SK-N-SH (cell line): ENCODE measurements at regions of chr18 and their contacts with region 1.

Region 1: GRCh38 chr18:9069601-9070000 is 32.9 kb upstream of the NDUFV2 start:
- DNase-seq: no peak
- H3K4me3 ChIP-seq: no peak overlapping the region
- H3K27ac ChIP-seq: no peak overlapping the region
- H3K4me1 ChIP-seq: no peaks in the 10 kb centered on the region; a peak in 1 of 4 replicates
- H3K27me3 ChIP-seq: no peaks in the 10 kb centered on the region
- CTCF ChIP-seq: no peak
- EP300 ChIP-seq: no peak
- RAD21 ChIP-seq: no peak

Region 2: GRCh38 chr18:9017170-9017904 is 52.3 kb before region 1 on chr18:
- CTCF ChIA-PET with region 1: no interaction called
- POLR2A ChIA-PET with region 1: no interaction called
- DNase-seq: peak; percentile 34
- H3K4me3 ChIP-seq: no peak overlapping the region
- H3K27ac ChIP-seq: peak overlapping the region; percentile 12 to 63; a peak in 2 of 4 replicates
- H3K4me1 ChIP-seq: peaks cover 0 to 3% of the 10 kb centered on the region in 2 experiments; a peak in 1 of 4 replicates
- H3K27me3 ChIP-seq: no peaks in the 10 kb centered on the region
- CTCF ChIP-seq: no peak
- EP300 ChIP-seq: 0 out of 4 replicates have a peak, but pooled peaks of 1 of the 2 experiments have one; percentile 22
- RAD21 ChIP-seq: no peak

Region 3: DNA sequence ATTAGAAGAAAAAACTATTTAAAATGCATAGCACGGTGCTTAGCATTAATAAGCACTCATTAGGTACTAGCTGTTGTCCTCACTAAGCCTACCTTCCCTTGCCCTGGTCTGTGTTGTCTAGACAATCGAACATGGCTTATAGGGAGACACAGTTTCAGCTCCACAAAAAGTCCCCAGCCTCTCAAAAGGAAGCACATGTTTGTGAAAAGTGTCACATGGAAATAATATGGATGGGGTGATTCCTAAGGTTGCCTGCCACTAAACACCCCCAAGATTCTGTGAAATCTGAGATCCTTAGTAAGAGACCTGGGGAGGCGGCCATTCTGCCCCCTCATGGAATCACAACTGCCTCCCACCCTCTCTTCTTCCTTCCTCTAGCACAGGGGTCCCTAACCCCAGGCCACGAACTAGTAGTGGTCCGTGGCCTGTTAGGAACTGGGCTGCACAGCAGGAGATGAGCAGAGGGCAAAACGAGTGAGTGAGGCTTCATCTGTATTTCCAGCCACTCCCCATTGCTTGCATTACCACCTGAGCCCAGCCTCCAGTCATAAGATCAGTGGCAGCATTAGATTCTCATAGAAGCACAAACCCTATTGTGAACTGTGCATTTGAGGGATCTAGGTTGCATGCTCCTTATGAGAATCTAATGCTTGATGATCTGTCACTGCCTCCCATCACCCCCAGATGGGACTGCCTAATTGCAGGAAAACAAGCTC is 26.7 kb before region 1 on chr18:
- CTCF ChIA-PET with region 1: no interaction called
- POLR2A ChIA-PET with region 1: no interaction called
- DNase-seq: no peak
- H3K4me3 ChIP-seq: no peak overlapping the region
- H3K27ac ChIP-seq: no peak overlapping the region
- H3K4me1 ChIP-seq: no peaks in the 10 kb centered on the region; a peak in 1 of 4 replicates
- H3K27me3 ChIP-seq: no peaks in the 10 kb centered on the region
- CTCF ChIP-seq: no peak
- EP300 ChIP-seq: no peak
- RAD21 ChIP-seq: no peak

Region 4: DNA sequence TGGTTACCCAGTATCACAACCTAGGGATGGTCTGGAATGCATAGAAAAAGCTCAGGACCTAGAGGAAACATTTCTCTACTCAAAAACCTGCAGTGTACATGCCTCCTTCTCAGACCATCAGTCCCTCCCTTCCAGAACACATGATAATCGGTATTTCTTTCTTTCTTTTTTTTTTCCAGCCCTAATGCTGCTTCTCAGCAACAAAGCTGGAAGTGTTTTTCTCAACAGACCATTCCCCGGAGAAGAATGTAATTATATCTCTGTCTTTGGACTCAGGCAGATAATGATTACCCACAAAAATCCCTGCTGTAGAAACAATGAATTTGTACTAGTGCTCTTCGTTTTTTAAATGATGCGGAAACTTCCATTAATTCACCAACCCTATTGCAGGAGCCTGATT is 11.2 kb before region 1 on chr18:
- CTCF ChIA-PET with region 1: interaction called, 21 read pairs
- POLR2A ChIA-PET with region 1: interaction called, 3 read pairs
- DNase-seq: peak; percentile 9
- H3K4me3 ChIP-seq: no peak overlapping the region
- H3K27ac ChIP-seq: no peak overlapping the region; a peak in 1 of 4 replicates
- H3K4me1 ChIP-seq: peaks cover 0 to 3% of the 10 kb centered on the region in 2 experiments; a peak in 1 of 4 replicates
- H3K27me3 ChIP-seq: no peaks in the 10 kb centered on the region
- CTCF ChIP-seq: no peak
- EP300 ChIP-seq: no peak
- RAD21 ChIP-seq: no peak

Region 5: DNA sequence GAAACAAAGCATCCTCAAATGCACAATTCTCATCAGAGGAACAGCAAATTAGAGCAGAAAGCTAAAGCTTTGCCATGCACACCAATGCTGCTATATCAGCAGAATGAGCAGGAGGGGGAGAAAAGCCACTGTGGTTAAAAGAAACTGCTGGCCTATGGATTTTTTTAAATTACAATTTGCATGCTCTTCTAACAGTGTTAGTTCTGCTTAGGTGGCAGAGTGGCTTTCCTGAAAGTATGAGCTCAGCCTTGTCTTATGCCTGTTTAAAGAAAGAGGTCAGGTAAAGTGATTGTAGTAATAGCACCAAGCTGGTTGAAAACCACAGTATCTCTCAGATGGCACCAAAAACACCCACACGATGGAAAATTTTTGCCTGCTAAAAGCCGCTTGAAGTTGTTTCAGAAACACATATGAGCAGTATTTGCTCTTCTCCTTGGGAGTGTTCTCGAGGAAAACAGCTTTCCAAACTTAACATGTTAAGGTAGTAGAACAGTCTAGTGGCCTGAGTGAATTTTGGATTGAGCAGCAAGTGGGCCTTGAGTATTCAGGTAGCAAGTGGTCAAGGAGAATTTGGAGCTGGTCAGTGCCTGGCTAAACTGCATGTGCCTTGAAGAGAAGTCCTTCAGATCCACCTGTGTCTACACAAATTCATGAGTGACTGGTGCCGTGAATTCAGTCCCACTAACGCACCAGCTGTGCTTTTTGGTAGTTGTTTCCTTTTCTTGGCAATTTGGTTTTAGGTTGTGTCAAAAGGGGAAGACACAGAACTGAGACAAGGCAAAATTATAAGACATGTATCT is 13.3 kb after region 1 on chr18:
- CTCF ChIA-PET with region 1: interaction called, 21 read pairs
- POLR2A ChIA-PET with region 1: no interaction called
- DNase-seq: no peak
- H3K4me3 ChIP-seq: no peak overlapping the region
- H3K27ac ChIP-seq: no peak overlapping the region
- H3K4me1 ChIP-seq: no peaks in the 10 kb centered on the region
- H3K27me3 ChIP-seq: no peaks in the 10 kb centered on the region
- CTCF ChIP-seq: no peak
- EP300 ChIP-seq: no peak
- RAD21 ChIP-seq: no peak

Region 6: DNA sequence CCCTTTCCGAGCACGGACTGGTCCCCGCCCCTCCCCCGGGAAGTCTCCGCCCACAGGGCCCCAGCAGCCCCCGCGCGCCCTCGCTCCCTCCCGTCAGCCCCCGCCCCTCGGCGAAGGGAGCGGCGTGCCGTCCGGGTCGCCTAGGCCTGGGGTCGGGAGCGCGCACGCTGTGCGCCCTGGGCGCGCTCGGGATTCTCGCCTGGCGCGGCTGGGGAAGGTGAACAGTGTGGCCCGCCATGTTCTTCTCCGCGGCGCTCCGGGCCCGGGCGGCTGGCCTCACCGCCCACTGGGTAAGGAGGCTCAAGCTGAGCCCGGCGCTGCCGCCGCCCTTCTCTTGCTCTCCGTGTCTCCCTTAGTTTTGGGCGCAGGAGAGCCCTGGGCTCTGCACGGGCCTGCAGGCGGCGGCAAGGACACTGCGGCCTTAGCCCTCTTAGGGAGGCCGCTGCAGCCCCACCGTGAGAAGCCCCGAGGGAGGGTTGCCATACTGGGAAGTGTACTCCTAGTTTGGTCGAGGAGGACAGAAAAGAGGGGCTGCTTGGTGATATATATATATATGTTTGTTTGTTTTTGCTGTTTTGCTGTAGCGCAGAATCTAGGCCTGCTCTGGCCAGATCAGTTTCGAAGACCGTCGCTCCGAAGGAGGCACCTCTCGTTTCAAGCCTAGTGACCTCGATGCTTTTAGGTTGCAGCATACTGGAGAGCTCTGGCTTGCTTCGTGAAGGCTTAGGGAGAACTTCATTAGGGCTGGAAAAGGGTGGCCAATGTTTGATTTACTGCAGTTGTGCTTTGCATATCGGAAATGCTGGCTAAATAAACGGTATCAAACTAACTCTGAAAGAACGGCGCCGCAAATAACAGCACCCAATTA is 33.1 kb after region 1 on chr18 and contains the start of gene NDUFV2:
- CTCF ChIA-PET with region 1: interaction called, 13 read pairs
- POLR2A ChIA-PET with region 1: no interaction called
- DNase-seq: peak; percentile 99
- H3K4me3 ChIP-seq: peak within 1 kb of the TSS; percentile 70 to 84
- H3K27ac ChIP-seq: peak within 1 kb of the TSS; percentile 88 to 93
- H3K4me1 ChIP-seq: peaks cover 11 to 24% of the 10 kb centered on the region in 2 experiments; a peak in 2 of 4 replicates
- H3K27me3 ChIP-seq: no peaks in the 10 kb centered on the region
- CTCF ChIP-seq: no peak
- EP300 ChIP-seq: no peak
- RAD21 ChIP-seq: no peak
- polyA plus RNA-seq, gene NDUFV2: 99.1 and 101 TPM in 2 replicates

Region 7: GRCh38 chr18:9126337-9126736 is 56.7 kb after region 1 on chr18:
- CTCF ChIA-PET with region 1: interaction called, 10 read pairs
- POLR2A ChIA-PET with region 1: no interaction called
- DNase-seq: no peak
- H3K4me3 ChIP-seq: no peak overlapping the region
- H3K27ac ChIP-seq: no peak overlapping the region
- H3K4me1 ChIP-seq: no peaks in the 10 kb centered on the region; a peak in 2 of 4 replicates
- H3K27me3 ChIP-seq: no peaks in the 10 kb centered on the region
- CTCF ChIP-seq: no peak
- EP300 ChIP-seq: no peak
- RAD21 ChIP-seq: no peak

Region 8: GRCh38 chr18:9136315-9137155 is 66.9 kb after region 1 on chr18 and contains the start of gene ANKRD12:
- CTCF ChIA-PET with region 1: interaction called, 13 read pairs
- POLR2A ChIA-PET with region 1: no interaction called
- DNase-seq: peak; percentile 98
- H3K4me3 ChIP-seq: peak within 1 kb of the TSS; percentile 86 to 90
- H3K27ac ChIP-seq: peak within 1 kb of the TSS; percentile 96 to 98
- H3K4me1 ChIP-seq: peaks cover 15 to 18% of the 10 kb centered on the region in 2 experiments; a peak in 3 of 4 replicates
- H3K27me3 ChIP-seq: no peaks in the 10 kb centered on the region
- CTCF ChIP-seq: no peak
- EP300 ChIP-seq: no peak
- RAD21 ChIP-seq: no peak
- polyA plus RNA-seq, gene ANKRD12: 1.1 and 1.3 TPM in 2 replicates

Region 9: GRCh38 chr18:9147440-9148202 is 78.0 kb after region 1 on chr18:
- CTCF ChIA-PET with region 1: interaction called, 15 read pairs
- POLR2A ChIA-PET with region 1: no interaction called
- DNase-seq: peak; percentile 50
- H3K4me3 ChIP-seq: no peak overlapping the region
- H3K27ac ChIP-seq: peak overlapping the region in 1 of 2 experiments; percentile 32
- H3K4me1 ChIP-seq: peaks cover 0 to 14% of the 10 kb centered on the region in 2 experiments; a peak in 2 of 4 replicates
- H3K27me3 ChIP-seq: no peaks in the 10 kb centered on the region
- CTCF ChIP-seq: peak; percentile 84
- EP300 ChIP-seq: no peak
- RAD21 ChIP-seq: peak; percentile 88